ENCODE measurements at regions of chr1 and their contacts with region 1.

Region 1: GRCh38 chr1:85313888-85314696 is 37.7 kb upstream of the BCL10 start:
- DNase-seq: peak; percentile 85
- H3K4me3 ChIP-seq: no peak overlapping the region
- H3K27ac ChIP-seq: peak overlapping the region; percentile 96
- H3K27me3 ChIP-seq: no peaks in the 10 kb centered on the region
- CTCF ChIP-seq: no peak

Region 2: GRCh38 chr1:85220756-85221201 is 93.3 kb before region 1 on chr1:
- CTCF ChIA-PET with region 1: no interaction called
- POLR2A ChIA-PET with region 1: no interaction called
- DNase-seq: peak; percentile 55
- H3K4me3 ChIP-seq: no peak overlapping the region
- H3K27ac ChIP-seq: peak overlapping the region; percentile 86
- H3K27me3 ChIP-seq: no peaks in the 10 kb centered on the region
- CTCF ChIP-seq: no peak

Region 3: DNA sequence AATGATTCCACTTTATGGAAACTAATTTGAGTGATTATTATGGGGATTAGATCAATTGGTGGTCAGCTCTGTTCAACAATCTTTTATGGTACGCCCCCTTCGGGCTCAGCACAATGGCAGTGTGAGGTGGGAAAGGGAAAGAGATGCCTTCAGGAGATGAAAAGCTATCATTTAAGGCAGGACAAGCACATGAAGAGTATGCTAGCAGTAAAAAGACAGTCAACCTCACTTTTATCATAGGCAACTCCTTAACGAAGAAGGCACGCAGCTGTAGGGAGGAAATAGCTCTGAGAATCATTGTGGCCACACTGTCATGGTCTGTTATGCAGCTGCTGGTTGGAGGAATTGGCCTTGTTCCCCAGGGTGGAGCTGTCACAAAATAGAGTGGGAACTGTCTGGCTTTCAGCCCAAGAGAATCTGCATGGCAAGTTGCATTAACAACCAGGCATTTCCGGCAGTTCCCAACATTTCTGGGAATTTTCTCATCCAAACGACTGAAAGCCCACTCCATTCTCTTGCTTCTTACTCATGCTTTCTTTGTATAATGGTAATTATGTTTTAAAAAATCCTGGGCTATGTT is 16.7 kb after region 1 on chr1:
- CTCF ChIA-PET with region 1: interaction called, 8 read pairs
- POLR2A ChIA-PET with region 1: interaction called, 10 read pairs
- DNase-seq: peak; percentile 91
- H3K4me3 ChIP-seq: no peak overlapping the region
- H3K27ac ChIP-seq: peak overlapping the region; percentile 96
- H3K27me3 ChIP-seq: no peaks in the 10 kb centered on the region
- CTCF ChIP-seq: 0 out of 2 replicates have a peak, but pooled peaks have one; percentile 7